ENCODE measurements at regions of chr7 and their contacts with region 1.

Region 1: GRCh38 chr7:50206453-50207250 is 97.9 kb upstream of the IKZF1 start:
- DNase-seq: peak; percentile 87
- ATAC-seq: peak; percentile 81
- H3K4me3 Mint-ChIP-seq: peak overlapping the region; percentile 63
- H3K27ac Mint-ChIP-seq: peak overlapping the region; percentile 93
- H3K4me1 Mint-ChIP-seq: peaks cover 97% of the 10 kb centered on the region
- H3K27me3 Mint-ChIP-seq: no peaks in the 10 kb centered on the region

Region 2: GRCh38 chr7:50156706-50157105 is 49.9 kb before region 1 on chr7:
- CTCF ChIA-PET with region 1: interaction called, 17 read pairs
- POLR2A ChIA-PET with region 1: no interaction called
- DNase-seq: no peak
- ATAC-seq: peak; percentile 38
- H3K4me3 Mint-ChIP-seq: peak overlapping the region; percentile 44
- H3K27ac Mint-ChIP-seq: peak overlapping the region; percentile 88
- H3K4me1 Mint-ChIP-seq: peaks cover 50% of the 10 kb centered on the region
- H3K27me3 Mint-ChIP-seq: no peaks in the 10 kb centered on the region

Region 3: GRCh38 chr7:50266635-50267386 is 60.2 kb after region 1 on chr7:
- CTCF ChIA-PET with region 1: interaction called, 113 read pairs
- POLR2A ChIA-PET with region 1: interaction called, 48 read pairs
- DNase-seq: peak; percentile 91
- ATAC-seq: peak; percentile 71
- H3K4me3 Mint-ChIP-seq: peak overlapping the region; percentile 69
- H3K27ac Mint-ChIP-seq: peak overlapping the region; percentile 98
- H3K4me1 Mint-ChIP-seq: peaks cover 95% of the 10 kb centered on the region
- H3K27me3 Mint-ChIP-seq: no peaks in the 10 kb centered on the region

Region 4: DNA sequence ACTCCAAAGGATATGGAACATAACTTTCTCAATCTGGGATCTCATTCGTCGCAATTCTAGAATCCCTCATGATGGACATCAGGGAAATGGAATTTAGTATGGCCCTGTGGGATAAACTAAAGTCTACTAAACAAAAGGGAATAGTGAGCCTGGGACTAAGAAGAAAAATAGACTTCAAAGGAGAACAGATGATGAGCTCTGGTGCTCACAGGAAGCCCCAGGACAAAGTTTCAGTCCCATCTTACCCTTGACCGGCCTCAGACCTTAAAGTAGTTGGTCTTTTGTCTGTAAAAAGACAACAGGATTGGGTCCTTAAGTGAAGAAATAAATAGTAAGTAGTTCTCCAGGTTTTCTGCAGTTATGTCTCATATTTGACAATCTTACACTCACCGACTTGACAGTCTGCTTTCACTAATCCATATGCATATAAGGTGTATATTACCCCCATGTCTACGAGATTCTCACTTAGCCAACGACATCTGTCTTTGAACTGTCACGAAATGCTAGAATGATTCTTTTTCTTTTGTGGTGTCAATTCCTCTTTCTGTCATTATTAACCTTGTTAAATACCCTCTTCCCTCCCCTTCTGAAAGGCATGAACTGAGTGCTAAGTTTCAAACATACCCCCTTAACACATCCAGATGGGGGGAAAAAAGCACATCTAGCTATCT is 87.0 kb after region 1 on chr7:
- CTCF ChIA-PET with region 1: interaction called, 10 read pairs
- POLR2A ChIA-PET with region 1: interaction called, 3 read pairs
- DNase-seq: no peak
- ATAC-seq: no peak
- H3K4me3 Mint-ChIP-seq: no peak overlapping the region
- H3K27ac Mint-ChIP-seq: no peak overlapping the region
- H3K4me1 Mint-ChIP-seq: peaks cover 9% of the 10 kb centered on the region
- H3K27me3 Mint-ChIP-seq: no peaks in the 10 kb centered on the region

Region 5: GRCh38 chr7:50335795-50336754 is 129.4 kb after region 1 on chr7:
- CTCF ChIA-PET with region 1: interaction called, 43 read pairs
- POLR2A ChIA-PET with region 1: interaction called, 8 read pairs
- DNase-seq: peak; percentile 86
- ATAC-seq: peak; percentile 16
- H3K4me3 Mint-ChIP-seq: no peak overlapping the region
- H3K27ac Mint-ChIP-seq: no peak overlapping the region
- H3K4me1 Mint-ChIP-seq: no peaks in the 10 kb centered on the region
- H3K27me3 Mint-ChIP-seq: no peaks in the 10 kb centered on the region

Region 6: GRCh38 chr7:50369143-50370026 is 162.7 kb after region 1 on chr7:
- CTCF ChIA-PET with region 1: interaction called, 154 read pairs
- POLR2A ChIA-PET with region 1: interaction called, 22 read pairs
- DNase-seq: peak; percentile 76
- ATAC-seq: peak; percentile 45
- H3K4me3 Mint-ChIP-seq: peak overlapping the region; percentile 6
- H3K27ac Mint-ChIP-seq: peak overlapping the region; percentile 76
- H3K4me1 Mint-ChIP-seq: peaks cover 96% of the 10 kb centered on the region
- H3K27me3 Mint-ChIP-seq: no peaks in the 10 kb centered on the region